ENCODE measurements at regions of chr4 and their contacts with region 1.

Region 1: GRCh38 chr4:13654158-13654797 is 26.8 kb upstream of the BOD1L1 start:
- DNase-seq: peak; percentile 84 to 96 (median 92)

Region 2: DNA sequence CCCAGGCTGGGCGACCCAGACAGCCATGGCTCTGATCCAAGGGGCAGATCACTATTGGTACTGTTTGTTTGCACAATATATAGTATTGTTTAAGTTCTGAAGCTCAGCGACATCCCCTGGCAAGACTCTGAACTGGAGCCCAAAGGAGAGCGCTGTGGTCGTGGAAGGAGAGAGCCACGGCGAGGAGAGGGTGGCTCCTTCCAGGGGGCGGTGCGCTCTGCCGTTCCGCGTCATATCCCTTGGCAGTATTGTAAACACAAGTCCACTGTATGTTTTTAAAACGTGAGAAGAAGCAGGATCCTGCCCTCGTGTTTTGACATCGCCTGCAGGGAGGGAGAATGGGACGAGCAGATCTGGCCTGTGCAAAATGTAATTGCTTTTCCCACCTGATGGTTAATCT is 355.6 kb before region 1 on chr4:
- intact Hi-C with region 1: no loop called
- DNase-seq: no peak

Region 3: GRCh38 chr4:13860126-13860525 is 205.8 kb after region 1 on chr4:
- intact Hi-C with region 1: loop called (anchors 10 kb)
- DNase-seq: peak in 27 of 42 donors; percentile 4 to 75 (median 36)

Region 4: DNA sequence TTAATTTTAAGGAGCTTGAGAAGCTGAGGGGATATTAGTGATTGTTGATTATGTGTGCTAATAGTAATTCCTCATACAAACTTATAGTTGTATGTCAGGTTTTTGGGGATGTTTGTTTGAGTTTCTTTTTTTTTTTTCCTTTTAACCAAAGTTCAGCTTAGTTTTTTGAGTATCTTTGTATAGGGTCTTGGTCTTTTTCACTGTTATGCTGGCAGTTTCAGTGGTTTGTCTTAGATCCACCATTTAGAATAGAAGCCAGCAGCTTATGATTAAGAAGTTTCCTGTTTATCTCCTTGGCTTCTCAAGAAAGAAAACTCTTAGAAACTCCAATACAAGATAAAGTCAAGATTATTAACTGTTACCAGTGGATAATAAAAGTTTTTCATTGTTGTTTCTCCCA is 1364.1 kb after region 1 on chr4:
- intact Hi-C with region 1: loop called (anchors 10 kb)
- DNase-seq: no peak

Measured in head of caudate nucleus (tissue), 42 donors.